Posterior vena cava (tissue), 2 donors: ENCODE measurements at regions of chr7 and their contacts with region 1.

Region 1: DNA sequence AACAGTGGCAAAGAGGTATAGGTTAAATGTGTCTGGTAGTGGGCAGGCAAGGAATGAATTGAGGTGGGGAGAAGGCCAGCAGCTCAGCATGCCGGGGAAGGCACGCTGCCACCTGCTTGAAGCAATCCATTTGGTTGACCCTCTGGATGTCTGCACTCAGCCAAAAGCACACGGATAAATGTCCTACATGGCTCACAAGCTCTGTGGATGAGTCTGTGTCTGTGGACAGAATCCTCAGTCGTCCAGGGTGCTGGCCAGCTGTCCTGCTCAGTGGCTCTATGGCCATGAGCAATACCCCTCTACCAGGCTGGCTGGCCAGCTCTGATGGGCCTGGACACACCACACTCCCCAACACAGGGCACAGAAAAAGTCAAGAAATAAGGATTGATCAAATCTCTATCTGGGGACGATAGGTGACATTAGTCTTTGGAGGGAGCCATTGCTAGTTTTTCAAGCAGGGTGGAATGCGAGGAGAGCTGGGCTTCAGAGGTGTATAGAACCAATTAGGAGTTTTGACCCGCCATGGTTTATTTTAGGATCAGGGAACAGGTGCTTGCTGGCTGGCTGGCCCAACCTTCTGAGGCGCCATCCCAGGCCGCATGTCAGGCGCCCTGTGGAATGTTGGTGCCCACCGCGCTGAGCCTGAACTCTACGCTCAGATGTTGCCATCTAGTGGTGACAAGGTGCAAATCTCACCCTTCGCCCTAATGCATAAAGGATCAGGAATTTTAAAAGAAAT is 493.4 kb downstream of the TNS3 start:
- DNase-seq: no peak

Region 2: DNA sequence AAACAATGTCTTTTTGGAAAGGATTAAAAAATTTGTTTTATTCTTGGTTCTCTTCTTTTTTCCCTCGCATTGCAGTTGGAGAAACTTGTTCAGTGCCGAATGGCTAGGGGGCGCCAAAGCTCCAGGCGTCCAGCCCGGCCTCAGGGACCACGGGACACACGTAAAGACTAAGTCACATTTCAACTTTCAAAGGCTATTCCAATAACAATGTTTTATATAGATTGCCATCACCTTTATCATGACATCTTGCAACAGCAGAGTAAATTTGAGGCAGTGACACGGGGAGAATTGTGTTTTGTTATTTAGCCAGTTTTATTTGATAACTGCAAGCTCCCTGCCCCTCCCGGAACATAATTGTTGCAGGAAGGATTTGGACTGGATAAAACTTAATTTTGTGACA is 1165.2 kb before region 1 on chr7:
- intact Hi-C with region 1: loop called (anchors 5 to 10 kb)
- DNase-seq: peak; percentile 94

Region 3: GRCh38 chr7:46363688-46364303 is 724.7 kb before region 1 on chr7:
- intact Hi-C with region 1: loop called in 1 of 2 experiments (anchors 5 kb)
- DNase-seq: no peak

Region 4: GRCh38 chr7:46776790-46777189 is 311.7 kb before region 1 on chr7:
- intact Hi-C with region 1: loop called in 1 of 2 experiments (anchors 10 kb)
- DNase-seq: no peak

Region 5: GRCh38 chr7:47074702-47075153 is 13.8 kb before region 1 on chr7:
- intact Hi-C with region 1: no loop called
- DNase-seq: no peak

Region 6: DNA sequence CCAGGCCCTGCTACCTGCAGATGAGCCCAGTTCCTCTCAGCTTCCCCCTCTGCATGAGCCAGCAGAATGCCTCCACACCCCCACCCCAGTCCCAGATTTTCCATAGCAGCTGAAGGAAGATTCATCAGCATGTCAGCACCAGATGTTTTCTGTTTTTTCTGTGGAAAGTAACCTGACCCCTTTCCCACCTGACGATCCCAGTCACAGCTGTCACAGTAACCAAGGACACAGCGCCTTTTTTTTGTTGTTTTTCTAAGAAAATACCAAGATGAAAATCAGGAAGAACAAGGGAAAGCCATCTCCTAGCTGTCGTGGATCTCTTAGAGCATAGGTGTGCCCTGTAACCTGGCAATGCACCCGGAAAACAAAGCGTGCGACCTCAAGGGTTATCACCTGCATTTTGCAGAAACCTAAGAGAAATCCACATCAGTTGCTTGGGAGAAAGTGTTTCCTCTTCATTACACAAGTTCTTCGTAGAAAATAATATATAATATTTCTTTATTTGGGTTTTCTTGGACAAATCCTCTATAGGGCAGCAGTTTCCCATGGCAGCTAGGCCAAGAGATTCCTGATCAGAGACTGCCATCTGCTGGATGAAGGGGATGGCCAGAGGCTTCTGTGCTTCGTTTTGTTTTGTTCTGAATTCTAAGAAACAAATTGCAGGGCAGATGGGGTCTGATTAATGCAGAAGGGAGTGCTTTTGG is 91.5 kb after region 1 on chr7:
- intact Hi-C with region 1: loop called in 1 of 2 experiments (anchors 10 kb)
- DNase-seq: peak; percentile 69

Region 7: GRCh38 chr7:47291461-47292081 is 203.1 kb after region 1 on chr7:
- intact Hi-C with region 1: no loop called
- DNase-seq: no peak